Activated naive CD4-positive, alpha-beta T cell treated with anti-CD3 and anti-CD28 coated beads, Interleukin-2, amount 10 ng/mL, durations not matched to agents 7 days and 5 days (primary cell): ENCODE measurements at regions of chr14 and their contacts with region 1.

Region 1: DNA sequence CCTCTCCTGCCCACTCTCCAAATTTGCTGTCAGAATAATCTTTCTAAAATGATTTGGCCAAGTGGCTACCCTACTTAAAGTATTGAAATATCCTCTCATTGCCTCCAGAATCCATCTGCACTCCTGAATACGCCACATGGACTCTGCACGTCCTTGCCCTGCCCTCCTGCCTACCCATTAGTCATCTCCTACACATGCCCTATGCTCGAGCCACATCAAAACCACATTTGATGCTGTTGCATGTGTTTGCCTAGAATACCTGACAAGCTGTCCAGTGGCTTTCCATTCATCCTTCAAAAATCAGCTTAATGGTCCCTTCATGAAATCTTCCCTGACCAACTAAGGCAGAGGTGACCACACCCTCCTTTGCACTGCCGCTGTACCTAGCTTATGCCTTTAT is 17.0 kb downstream of the VCPKMT start:
- DNase-seq: no peak
- H3K4me3 Mint-ChIP-seq: no peak overlapping the region
- H3K27ac Mint-ChIP-seq: no peak overlapping the region
- H3K4me1 Mint-ChIP-seq: peaks cover 82% of the 10 kb centered on the region
- H3K27me3 Mint-ChIP-seq: no peaks in the 10 kb centered on the region

Region 2: DNA sequence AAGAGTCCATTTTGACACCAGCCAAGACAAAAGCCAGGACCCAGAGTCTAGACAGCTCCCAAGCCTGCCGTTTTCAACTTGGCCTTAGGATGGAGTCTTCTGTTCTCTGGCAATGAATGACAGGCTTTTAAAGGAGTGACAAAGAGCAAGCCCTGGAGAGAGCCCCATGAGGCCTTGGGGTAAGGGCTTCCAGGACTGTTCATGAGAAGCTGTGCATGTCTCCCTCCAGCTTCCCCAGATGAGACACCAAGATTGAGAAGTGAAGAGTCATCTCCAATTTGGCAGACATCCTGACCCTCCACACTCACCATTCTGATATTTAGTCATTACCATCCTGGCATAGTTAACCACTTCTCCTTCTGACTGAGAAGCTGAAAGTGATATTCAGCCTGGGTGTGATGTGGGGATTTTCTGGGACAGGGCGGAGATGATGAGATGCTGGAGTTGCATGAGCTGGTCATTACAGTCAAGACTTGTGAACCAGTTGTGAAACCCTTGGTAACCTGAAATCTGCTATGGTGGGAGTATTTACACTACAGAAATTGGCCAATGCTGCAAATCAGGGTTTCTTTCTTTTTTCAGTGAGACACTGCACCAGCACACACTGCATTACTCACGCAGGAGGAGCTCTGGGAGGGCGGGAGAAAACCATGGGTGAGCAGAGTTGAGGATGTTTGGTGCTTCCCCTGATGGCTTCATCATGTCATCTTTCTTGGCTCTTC is 60.8 kb before region 1 on chr14:
- CTCF ChIA-PET with region 1: interaction called, 14 read pairs
- DNase-seq: peak; percentile 50
- H3K4me3 Mint-ChIP-seq: peak overlapping the region; percentile 25
- H3K27ac Mint-ChIP-seq: peak overlapping the region; percentile 97
- H3K4me1 Mint-ChIP-seq: peaks cover 73% of the 10 kb centered on the region
- H3K27me3 Mint-ChIP-seq: no peaks in the 10 kb centered on the region